HCT116 (cell line): ENCODE measurements at regions of chr2 and their contacts with region 1.

Region 1: DNA sequence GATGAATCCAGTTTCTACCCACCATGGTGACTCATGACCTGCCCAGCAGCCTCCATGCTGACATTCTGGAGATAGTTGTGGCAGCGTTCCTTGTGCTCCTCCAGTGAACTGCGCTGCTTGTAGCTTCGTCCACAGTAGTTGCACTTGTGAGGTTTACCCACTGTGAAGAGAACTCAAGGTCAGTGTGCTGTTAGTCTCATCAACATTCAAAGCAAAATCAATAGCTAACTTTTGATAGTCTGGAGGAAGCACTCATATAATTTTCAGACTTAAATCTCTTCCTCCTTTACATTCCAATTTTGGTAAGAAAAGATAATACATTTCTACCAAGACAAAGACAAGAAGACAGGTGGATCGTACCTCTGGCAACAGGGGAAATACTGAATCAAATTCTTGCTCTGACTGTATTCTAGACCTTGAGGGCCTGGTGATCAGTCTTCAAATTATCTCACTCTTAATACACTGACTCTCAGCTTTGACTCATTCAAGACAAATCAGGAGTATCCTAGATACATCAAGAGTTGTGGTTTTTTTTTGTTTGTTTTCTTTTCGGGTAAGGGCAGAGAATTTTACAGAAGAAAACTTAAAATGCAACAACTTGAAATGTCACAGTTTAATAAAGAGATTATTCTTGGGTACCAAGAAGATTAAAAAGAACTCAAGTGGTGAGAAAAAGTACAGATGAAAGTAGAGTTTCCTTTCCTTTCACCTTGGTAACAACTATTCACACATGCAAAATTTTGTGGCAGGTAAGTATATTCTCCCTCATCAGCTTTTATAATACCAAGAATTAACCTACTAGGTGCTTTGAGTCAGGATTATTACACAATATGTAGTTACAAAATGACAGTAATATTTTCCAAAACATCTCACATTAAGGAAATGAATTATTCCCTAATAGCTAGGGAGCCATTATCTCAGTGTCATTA is 129.2 kb downstream of the IKZF2 start:
- DNase-seq: no peak
- ATAC-seq: no peak
- H3K4me3 ChIP-seq: no peak overlapping the region
- H3K27ac ChIP-seq: no peak overlapping the region
- H3K4me1 ChIP-seq: no peaks in the 10 kb centered on the region
- H3K27me3 ChIP-seq: no peaks in the 10 kb centered on the region
- CTCF ChIP-seq: no peak
- POLR2A ChIP-seq: no peak
- RAD21 ChIP-seq: no peak

Region 2: GRCh38 chr2:212528106-212528856 is 494.0 kb before region 1 on chr2:
- CTCF ChIA-PET with region 1: no interaction called
- POLR2A ChIA-PET with region 1: no interaction called
- RAD21 ChIA-PET with region 1: no interaction called
- intact Hi-C with region 1: no loop called
- DNase-seq: no peak
- ATAC-seq: no peak
- H3K4me3 ChIP-seq: no peak overlapping the region
- H3K27ac ChIP-seq: no peak overlapping the region
- H3K4me1 ChIP-seq: no peaks in the 10 kb centered on the region
- H3K27me3 ChIP-seq: no peaks in the 10 kb centered on the region
- CTCF ChIP-seq: peak; percentile 4 to 25 (median 15); a peak in 2 of 6 replicates
- POLR2A ChIP-seq: no peak
- RAD21 ChIP-seq: peak; percentile 23; the same call in 1 of the 2 replicates

Region 3: GRCh38 chr2:212974692-212975091 is 47.5 kb before region 1 on chr2:
- CTCF ChIA-PET with region 1: interaction called, 4 read pairs
- POLR2A ChIA-PET with region 1: no interaction called
- RAD21 ChIA-PET with region 1: no interaction called
- intact Hi-C with region 1: loop called (anchors 5 kb)
- DNase-seq: no peak
- ATAC-seq: no peak
- H3K4me3 ChIP-seq: no peak overlapping the region
- H3K27ac ChIP-seq: no peak overlapping the region
- H3K4me1 ChIP-seq: no peaks in the 10 kb centered on the region
- H3K27me3 ChIP-seq: no peaks in the 10 kb centered on the region
- CTCF ChIP-seq: no peak
- POLR2A ChIP-seq: no peak
- RAD21 ChIP-seq: no peak